ENCODE measurements at regions of chr18 and their contacts with region 1.

Region 1: GRCh38 chr18:48663931-48664847 is 125.4 kb downstream of the CTIF start:
- DNase-seq: peak; percentile 18 to 87
- H3K4me3 ChIP-seq: no peak overlapping the region
- H3K4me1 ChIP-seq: no peaks in the 10 kb centered on the region
- H3K27me3 ChIP-seq: no peaks in the 10 kb centered on the region

Region 2: DNA sequence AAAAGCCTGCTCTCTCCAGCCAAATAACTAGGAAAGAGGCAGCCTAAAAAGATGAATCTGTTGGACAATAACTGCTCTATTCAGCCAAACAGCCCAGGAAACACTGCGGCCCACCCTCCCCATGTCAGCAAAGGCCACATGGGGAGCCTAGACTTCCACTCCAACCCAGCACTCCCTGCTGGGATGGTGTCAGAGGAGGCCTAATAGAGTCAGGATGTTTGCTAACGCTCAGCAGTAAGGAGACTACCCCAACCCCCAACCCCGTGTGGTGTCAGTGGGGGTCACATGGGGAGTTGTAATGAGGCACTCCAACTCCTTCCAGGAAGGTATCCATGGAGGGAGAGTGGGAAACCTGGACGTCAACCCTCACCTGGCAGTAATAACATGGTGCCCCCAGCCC is 296.6 kb before region 1 on chr18:
- in situ Hi-C with region 1: no loop called
- DNase-seq: no peak
- H3K4me3 ChIP-seq: no peak overlapping the region
- H3K4me1 ChIP-seq: no peaks in the 10 kb centered on the region
- H3K27me3 ChIP-seq: no peaks in the 10 kb centered on the region

Region 3: GRCh38 chr18:48475635-48476549 is 188.3 kb before region 1 on chr18:
- in situ Hi-C with region 1: loop called (anchors 5 kb)
- DNase-seq: peak; percentile 62 to 70
- H3K4me3 ChIP-seq: no peak overlapping the region
- H3K4me1 ChIP-seq: no peaks in the 10 kb centered on the region
- H3K27me3 ChIP-seq: peaks cover 13% of the 10 kb centered on the region